ENCODE measurements at regions of chr19 and their contacts with region 1.

Region 1: GRCh38 chr19:36060430-36060829 is 5.7 kb downstream of the WDR62 start:
- DNase-seq: peak; percentile 68 to 90
- ATAC-seq: peak; percentile 84 to 90
- H3K4me3 ChIP-seq: no peak overlapping the region
- H3K27ac ChIP-seq: no peak overlapping the region
- H3K4me1 ChIP-seq: peaks cover 15% of the 10 kb centered on the region
- CTCF ChIP-seq: peak; percentile 77
- EP300 ChIP-seq: no peak
- POLR2A ChIP-seq: no peak
- RAD21 ChIP-seq: peak; percentile 80 to 84

Region 2: DNA sequence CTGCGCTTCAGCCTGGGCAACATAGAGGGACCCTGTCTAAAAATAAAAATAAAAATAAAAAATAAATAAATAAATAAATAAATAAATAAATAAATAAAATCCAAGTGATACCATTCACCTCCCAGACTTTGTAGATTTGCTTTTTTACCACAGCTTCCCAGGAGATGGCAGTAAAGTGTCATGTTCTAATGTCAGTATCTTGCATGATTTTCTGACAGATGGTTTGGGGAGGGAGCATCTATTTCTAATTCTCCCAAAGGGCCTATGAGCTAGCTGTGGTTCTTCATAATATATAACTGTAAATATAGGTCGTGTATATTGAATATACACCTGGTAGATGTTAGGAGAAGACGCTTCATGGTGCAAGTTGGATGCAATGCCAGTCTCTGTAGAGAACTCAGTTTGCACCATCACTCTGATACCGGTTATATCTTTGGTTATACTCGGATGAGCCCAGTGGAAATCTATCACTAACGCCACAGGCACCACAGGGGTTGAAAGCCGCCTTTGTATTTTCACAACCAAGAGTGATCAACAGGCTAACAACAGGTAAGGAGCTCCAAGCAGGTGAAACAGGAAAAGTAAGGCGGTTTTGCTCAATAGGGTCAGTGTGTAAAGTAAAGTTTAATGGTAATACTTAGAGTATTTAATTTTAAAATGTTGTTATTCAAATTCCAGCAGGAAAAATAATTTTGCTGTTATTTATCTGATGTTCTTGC is 178.2 kb before region 1 on chr19:
- CTCF ChIA-PET with region 1: interaction called, 11 read pairs
- POLR2A ChIA-PET with region 1: no interaction called
- DNase-seq: peak; percentile 87 to 91
- ATAC-seq: peak; percentile 55 to 56; a peak in 4 of 6 replicates
- H3K4me3 ChIP-seq: no peak overlapping the region
- H3K27ac ChIP-seq: no peak overlapping the region
- H3K4me1 ChIP-seq: peaks cover 7% of the 10 kb centered on the region
- CTCF ChIP-seq: peak; percentile 98
- EP300 ChIP-seq: no peak
- POLR2A ChIP-seq: no peak
- RAD21 ChIP-seq: peak; percentile 96 to 97

Region 3: GRCh38 chr19:36032251-36033104 is 28.0 kb before region 1 on chr19 and contains the start of gene CLIP3:
- CTCF ChIA-PET with region 1: interaction called, 10 read pairs
- POLR2A ChIA-PET with region 1: no interaction called
- DNase-seq: no peak
- ATAC-seq: no peak
- H3K4me3 ChIP-seq: no peak within 1 kb of the TSS
- H3K27ac ChIP-seq: no peak within 1 kb of the TSS
- H3K4me1 ChIP-seq: no peaks in the 10 kb centered on the region
- CTCF ChIP-seq: no peak
- EP300 ChIP-seq: no peak
- POLR2A ChIP-seq: no peak
- RAD21 ChIP-seq: no peak
- polyA plus RNA-seq, gene CLIP3: 1.1 and 1.4 TPM in 2 replicates

Region 4: GRCh38 chr19:36084231-36085009 is 24.0 kb after region 1 on chr19:
- CTCF ChIA-PET with region 1: interaction called, 17 read pairs
- POLR2A ChIA-PET with region 1: no interaction called
- DNase-seq: no peak
- ATAC-seq: peak in 1 of 2 experiments; percentile 8; a peak in 1 of 6 replicates
- H3K4me3 ChIP-seq: no peak overlapping the region
- H3K27ac ChIP-seq: no peak overlapping the region
- H3K4me1 ChIP-seq: 0 out of 3 replicates have a peak, but pooled peaks cover 5% of the 10 kb centered on the region
- CTCF ChIP-seq: no peak
- EP300 ChIP-seq: no peak
- POLR2A ChIP-seq: no peak
- RAD21 ChIP-seq: no peak

Region 5: DNA sequence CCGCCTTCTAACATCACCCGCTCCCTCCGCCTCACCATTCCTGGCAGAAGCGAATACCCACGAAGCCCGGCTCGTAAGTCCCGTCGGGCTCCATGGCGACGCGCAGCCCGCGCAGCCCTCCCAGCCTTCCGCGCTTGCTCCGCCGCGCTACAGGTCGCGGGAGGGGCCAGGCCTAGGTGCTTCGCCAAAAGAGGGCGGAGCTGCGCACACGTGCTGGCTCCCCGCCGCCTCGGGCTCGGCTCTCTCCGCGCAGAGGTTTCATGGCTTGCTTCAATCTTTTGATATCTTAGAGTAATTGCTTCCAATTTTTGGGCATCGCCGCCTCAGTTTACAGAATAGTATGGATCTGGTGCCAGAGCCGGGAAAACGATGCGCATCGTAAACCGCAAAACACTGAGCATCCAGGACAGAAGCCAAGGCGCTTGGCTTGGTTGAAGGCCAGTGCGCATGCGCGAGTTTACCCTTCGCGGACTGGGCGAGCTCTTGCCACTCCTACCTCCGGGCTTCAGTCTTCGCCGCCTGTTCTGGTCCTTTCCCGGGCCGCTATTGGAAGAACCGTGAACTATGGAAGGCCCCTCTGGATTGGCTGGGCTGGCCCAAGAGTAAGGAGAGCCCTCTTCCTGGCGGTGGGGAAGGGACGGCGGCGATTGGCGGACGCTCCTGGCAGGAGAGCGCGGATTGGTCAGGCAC is 54.5 kb after region 1 on chr19 and contains the start of gene POLR2I:
- CTCF ChIA-PET with region 1: interaction called, 157 read pairs
- POLR2A ChIA-PET with region 1: interaction called, 57 read pairs
- DNase-seq: peak; percentile 100
- ATAC-seq: peak; percentile 85 to 96
- H3K4me3 ChIP-seq: peak within 1 kb of the TSS; percentile 75
- H3K27ac ChIP-seq: peak within 1 kb of the TSS; percentile 89 to 91
- H3K4me1 ChIP-seq: peaks cover 25% of the 10 kb centered on the region
- CTCF ChIP-seq: no peak
- EP300 ChIP-seq: no peak
- POLR2A ChIP-seq: peak; percentile 89
- RAD21 ChIP-seq: no peak
- polyA plus RNA-seq, gene POLR2I: 107 and 123 TPM in 2 replicates

Region 6: GRCh38 chr19:36401475-36401874 is 341.0 kb after region 1 on chr19:
- CTCF ChIA-PET with region 1: no interaction called
- POLR2A ChIA-PET with region 1: no interaction called
- DNase-seq: no peak
- ATAC-seq: no peak
- H3K4me3 ChIP-seq: no peak overlapping the region
- H3K27ac ChIP-seq: no peak overlapping the region
- H3K4me1 ChIP-seq: no peaks in the 10 kb centered on the region
- CTCF ChIP-seq: no peak
- EP300 ChIP-seq: no peak
- POLR2A ChIP-seq: no peak
- RAD21 ChIP-seq: no peak

Measured in A549 (cell line).